ENCODE measurements at regions of chr3 and their contacts with region 1.

Region 1: GRCh38 chr3:112043603-112044201 is 9.2 kb downstream of the TMPRSS7 start:
- DNase-seq: peak; percentile 44
- H3K4me3 ChIP-seq: no peak overlapping the region
- H3K27ac ChIP-seq: no peak overlapping the region
- H3K27me3 ChIP-seq: no peaks in the 10 kb centered on the region
- CTCF ChIP-seq: peak; percentile 93

Region 2: DNA sequence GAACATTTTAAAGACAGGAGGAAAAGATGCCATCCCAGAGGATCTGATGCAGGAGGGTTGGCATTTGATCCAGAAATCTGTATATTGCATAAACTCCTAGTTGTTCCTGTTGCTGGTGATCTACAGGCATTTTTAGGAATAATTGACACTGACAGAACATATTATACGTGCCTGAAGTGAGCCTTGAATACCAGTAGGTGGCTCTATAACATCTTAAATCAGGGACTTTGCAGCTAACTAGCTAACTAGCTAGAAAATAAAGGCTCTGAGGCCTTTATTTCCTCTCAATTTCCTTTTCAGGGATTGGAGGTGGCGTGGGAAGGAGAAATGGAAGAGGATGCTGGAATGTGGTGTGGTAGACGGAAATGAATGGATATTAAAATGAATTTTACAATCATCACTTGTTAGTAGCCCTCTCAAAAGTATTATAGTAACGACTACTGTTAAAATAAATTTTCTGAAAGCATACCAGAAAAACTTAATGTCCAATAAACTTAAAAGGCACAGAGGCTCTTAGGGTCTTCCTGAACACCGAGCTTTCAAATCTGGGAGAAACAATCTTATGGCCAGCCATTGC is 374.7 kb before region 1 on chr3:
- CTCF ChIA-PET with region 1: interaction called, 15 read pairs
- POLR2A ChIA-PET with region 1: no interaction called
- DNase-seq: peak; percentile 37
- H3K4me3 ChIP-seq: no peak overlapping the region
- H3K27ac ChIP-seq: no peak overlapping the region
- H3K27me3 ChIP-seq: no peaks in the 10 kb centered on the region
- CTCF ChIP-seq: peak; percentile 76

Region 3: DNA sequence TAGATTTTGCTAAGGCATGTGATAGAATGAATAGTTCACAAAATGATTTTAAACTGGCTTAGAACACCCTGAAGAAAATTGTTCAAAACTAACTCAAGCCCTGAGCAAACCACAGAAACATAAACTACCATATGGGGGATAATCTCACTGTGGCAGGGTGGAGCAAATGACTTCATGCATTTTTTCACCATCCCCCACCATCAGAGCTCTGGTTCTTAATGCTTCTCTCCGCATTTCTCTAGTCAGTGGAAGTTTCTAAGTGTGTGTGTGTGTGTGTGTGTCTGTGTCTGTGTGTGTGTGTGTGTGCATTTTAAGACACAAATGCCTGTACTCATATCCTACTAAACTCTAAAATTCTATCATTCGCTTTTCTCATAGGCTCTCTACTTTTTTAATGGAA is 291.7 kb before region 1 on chr3:
- CTCF ChIA-PET with region 1: no interaction called
- POLR2A ChIA-PET with region 1: no interaction called
- DNase-seq: peak; percentile 81
- H3K4me3 ChIP-seq: no peak overlapping the region
- H3K27ac ChIP-seq: no peak overlapping the region
- H3K27me3 ChIP-seq: no peaks in the 10 kb centered on the region
- CTCF ChIP-seq: no peak

Region 4: DNA sequence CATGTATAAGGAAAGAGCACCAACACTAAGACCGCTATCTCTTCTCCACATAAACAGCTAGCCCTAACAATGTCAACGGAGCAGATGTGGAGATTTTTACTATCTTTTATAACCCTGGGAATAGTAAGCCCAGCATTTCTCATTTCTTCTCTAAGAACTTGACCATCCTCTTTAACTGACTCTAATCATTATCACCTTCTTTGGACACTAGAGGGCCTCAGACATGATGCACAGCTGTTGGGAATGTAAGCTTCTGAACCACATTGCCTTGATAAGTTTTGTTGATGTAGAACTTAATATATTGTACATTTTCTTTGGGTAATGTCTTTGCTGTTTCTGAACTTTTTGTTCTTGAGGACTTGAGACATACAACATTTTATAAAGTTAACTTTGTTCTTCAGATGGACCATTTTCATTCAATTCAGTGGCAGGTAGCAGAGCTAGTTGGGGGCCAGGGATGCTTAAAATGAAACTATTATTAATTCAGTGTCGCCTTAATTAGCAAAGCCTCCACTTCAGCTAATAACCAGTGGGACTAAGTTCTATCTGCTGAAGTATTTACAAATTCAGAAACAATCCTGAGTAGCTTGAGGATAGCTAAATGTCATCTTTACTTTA is 54.5 kb before region 1 on chr3:
- CTCF ChIA-PET with region 1: interaction called, 80 read pairs
- POLR2A ChIA-PET with region 1: no interaction called
- DNase-seq: peak; percentile 32
- H3K4me3 ChIP-seq: no peak overlapping the region
- H3K27ac ChIP-seq: no peak overlapping the region
- H3K27me3 ChIP-seq: no peaks in the 10 kb centered on the region
- CTCF ChIP-seq: peak; percentile 83

Region 5: GRCh38 chr3:112007633-112008032 is 36.1 kb before region 1 on chr3:
- CTCF ChIA-PET with region 1: interaction called, 39 read pairs
- POLR2A ChIA-PET with region 1: no interaction called
- DNase-seq: no peak
- H3K4me3 ChIP-seq: no peak overlapping the region
- H3K27ac ChIP-seq: no peak overlapping the region
- H3K27me3 ChIP-seq: no peaks in the 10 kb centered on the region
- CTCF ChIP-seq: no peak

Region 6: DNA sequence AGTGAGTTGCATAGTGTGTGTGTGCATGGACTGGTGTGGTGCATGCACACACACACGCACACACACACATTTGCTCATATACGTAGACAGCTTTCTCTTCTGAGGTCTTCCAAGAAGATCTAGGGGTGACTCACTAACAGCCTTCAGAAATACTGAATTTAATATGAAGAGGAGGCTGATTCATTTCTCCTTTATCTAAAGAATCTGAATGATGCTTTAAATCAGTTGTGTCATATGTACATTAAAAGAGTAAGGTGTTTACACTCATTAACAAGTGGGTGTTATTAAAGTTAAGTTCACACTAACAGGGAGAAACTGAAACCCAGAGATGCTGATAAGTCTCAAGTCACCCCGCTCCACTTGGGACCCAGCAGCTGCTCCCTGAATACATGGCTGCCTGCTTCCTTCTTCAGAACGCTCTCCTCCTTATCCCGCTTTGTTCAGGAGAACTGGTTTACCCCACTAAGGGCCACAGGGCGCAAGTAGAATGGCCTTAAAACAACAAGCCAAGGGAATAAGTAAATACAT is 12.8 kb after region 1 on chr3:
- CTCF ChIA-PET with region 1: interaction called, 62 read pairs
- POLR2A ChIA-PET with region 1: interaction called, 5 read pairs
- DNase-seq: peak; percentile 30
- H3K4me3 ChIP-seq: no peak overlapping the region
- H3K27ac ChIP-seq: no peak overlapping the region
- H3K27me3 ChIP-seq: no peaks in the 10 kb centered on the region
- CTCF ChIP-seq: no peak

Measured in AG04450 (cell line).